ENCODE measurements at regions of chr19 and their contacts with region 1.

Region 1: GRCh38 chr19:52527134-52527955 is at the start of gene ZNF808:
- DNase-seq: peak; percentile 96
- H3K4me3 Mint-ChIP-seq: peak within 1 kb of the TSS; percentile 97
- H3K27ac Mint-ChIP-seq: peak within 1 kb of the TSS; percentile 98
- H3K4me1 Mint-ChIP-seq: peaks cover 22% of the 10 kb centered on the region
- H3K27me3 Mint-ChIP-seq: no peaks in the 10 kb centered on the region
- total RNA-seq, gene ZNF808: 21.2 and 21.6 TPM in 2 replicates

Region 2: GRCh38 chr19:51926784-51927742 is 600.3 kb before region 1 on chr19 and contains the start of gene ZNF613:
- intact Hi-C with region 1: loop called (anchors 5 kb)
- DNase-seq: peak; percentile 93
- H3K4me3 Mint-ChIP-seq: peak within 1 kb of the TSS; percentile 100
- H3K27ac Mint-ChIP-seq: peak within 1 kb of the TSS; percentile 97
- H3K4me1 Mint-ChIP-seq: peaks cover 19% of the 10 kb centered on the region
- H3K27me3 Mint-ChIP-seq: no peaks in the 10 kb centered on the region
- total RNA-seq, gene ZNF613: 3.5 and 5.0 TPM in 2 replicates

Region 3: DNA sequence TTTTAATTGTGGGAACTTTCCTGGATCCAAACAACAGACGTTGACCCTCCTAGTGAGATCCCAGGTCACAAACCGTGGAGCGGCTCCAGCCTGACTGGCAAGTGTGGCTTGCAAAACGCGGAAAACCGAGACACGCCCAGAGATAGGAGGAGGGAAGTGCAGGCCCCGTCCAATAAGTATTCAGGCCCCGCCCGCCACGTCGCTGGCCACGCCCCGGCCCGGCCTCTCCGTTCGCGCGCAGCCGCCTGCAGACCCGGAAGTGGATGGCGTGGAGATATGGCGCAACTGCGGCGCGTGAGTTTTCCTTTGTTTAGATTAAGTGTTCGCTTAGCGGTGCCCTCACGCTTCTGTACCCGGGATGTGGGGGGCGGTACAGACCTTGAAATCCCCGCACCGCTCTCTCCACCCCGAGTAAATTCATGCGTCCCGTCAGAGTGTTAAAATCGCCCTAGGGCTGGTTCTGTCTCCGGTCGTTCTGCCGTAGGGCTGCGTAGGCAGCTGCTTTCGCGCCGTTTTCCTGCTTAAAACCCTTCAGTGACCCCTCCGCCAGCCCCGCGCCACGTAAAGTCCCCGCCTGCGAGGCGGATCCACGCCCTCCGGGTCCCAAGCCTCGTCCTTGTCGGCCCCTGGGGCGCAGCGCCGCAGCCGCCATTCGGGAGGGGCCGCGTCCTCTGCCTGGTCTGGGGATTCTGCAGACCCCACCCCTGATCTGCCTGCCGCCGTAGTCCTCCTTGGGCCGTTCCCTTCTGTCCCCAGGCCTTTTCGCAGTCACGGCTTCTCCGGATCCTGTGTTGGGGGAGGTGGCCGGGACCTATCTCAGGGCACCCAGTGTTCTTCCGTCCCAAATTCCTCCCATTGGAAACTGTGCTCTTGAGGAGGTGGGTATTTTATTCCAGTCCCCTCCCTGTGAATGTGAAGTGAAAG is 257.7 kb before region 1 on chr19 and contains the start of gene ZNF766:
- intact Hi-C with region 1: loop called (anchors 1 kb)
- DNase-seq: peak; percentile 99
- H3K4me3 Mint-ChIP-seq: peak within 1 kb of the TSS; percentile 99
- H3K27ac Mint-ChIP-seq: peak within 1 kb of the TSS; percentile 96
- H3K4me1 Mint-ChIP-seq: peaks cover 11% of the 10 kb centered on the region
- H3K27me3 Mint-ChIP-seq: no peaks in the 10 kb centered on the region
- total RNA-seq, gene ZNF766: 18.2 and 19.9 TPM in 2 replicates

Region 4: DNA sequence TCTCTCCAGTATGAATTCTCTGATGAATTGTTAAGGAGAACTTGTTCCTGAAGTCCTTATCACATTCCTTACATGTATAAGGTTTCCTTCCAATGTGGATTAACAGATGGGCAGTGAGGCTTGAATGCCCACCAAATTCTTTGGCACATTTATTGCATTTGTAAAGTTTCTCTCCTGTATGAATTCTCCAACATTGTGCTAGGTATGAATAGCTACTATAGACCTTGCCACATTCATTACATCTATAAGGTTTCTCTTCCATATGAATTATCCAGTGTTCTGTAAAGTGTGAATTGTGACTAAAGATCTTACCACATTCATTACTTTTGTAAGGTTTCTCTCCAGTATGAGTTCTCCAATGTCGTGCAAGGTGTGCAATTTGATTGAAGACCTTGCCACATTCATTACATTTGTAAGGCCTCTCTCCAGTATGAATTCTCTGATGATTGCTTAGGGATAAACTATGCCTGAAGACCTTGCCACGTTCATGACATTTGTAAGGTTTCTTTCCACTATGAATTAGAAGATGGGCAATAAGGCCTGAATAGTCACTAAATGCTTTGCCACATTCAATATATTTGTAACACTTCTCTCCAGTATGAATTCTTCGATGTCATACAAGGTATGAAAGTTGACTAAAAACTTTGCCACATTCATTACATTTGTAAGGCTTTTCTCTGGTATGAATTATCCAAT is 53.5 kb before region 1 on chr19:
- intact Hi-C with region 1: no loop called
- DNase-seq: no peak
- H3K4me3 Mint-ChIP-seq: no peak overlapping the region
- H3K27ac Mint-ChIP-seq: no peak overlapping the region
- H3K4me1 Mint-ChIP-seq: no peaks in the 10 kb centered on the region
- H3K27me3 Mint-ChIP-seq: no peaks in the 10 kb centered on the region

Region 5: DNA sequence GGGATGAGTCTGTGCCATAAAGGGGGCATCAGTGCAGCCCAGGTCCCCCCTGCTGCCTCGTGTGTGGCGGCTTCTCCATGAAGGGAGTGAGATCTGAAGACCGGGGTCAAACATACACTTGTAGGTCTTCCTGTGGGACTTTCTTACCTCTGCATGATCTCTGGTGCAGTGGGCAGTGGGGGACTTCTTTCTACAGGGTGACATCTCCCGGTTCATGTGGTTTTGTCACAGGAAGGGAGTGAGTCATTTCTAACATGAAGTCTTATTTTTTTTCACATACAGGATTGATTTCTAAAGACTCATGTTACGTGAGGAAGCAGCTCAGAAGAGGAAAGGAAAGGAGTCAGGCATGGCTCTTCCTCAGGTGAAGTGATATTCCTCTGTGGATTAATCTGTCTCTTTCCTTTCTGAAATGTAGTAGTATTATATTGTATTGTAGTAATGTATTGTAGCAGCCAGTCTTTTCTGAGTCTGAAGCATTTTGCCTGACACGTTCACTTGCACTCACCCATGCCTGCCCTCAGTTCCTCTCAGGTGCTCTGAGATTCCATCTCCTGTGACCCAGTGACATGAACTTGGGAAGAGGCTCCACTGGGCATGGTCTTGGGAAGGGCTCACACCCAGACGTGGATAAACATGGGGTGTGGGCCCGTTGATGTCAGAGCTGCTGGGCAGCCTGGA is 15.8 kb after region 1 on chr19:
- intact Hi-C with region 1: no loop called
- DNase-seq: peak; percentile 77
- H3K4me3 Mint-ChIP-seq: peak overlapping the region; percentile 22
- H3K27ac Mint-ChIP-seq: peak overlapping the region; percentile 46
- H3K4me1 Mint-ChIP-seq: peaks cover 15% of the 10 kb centered on the region
- H3K27me3 Mint-ChIP-seq: no peaks in the 10 kb centered on the region

Region 6: DNA sequence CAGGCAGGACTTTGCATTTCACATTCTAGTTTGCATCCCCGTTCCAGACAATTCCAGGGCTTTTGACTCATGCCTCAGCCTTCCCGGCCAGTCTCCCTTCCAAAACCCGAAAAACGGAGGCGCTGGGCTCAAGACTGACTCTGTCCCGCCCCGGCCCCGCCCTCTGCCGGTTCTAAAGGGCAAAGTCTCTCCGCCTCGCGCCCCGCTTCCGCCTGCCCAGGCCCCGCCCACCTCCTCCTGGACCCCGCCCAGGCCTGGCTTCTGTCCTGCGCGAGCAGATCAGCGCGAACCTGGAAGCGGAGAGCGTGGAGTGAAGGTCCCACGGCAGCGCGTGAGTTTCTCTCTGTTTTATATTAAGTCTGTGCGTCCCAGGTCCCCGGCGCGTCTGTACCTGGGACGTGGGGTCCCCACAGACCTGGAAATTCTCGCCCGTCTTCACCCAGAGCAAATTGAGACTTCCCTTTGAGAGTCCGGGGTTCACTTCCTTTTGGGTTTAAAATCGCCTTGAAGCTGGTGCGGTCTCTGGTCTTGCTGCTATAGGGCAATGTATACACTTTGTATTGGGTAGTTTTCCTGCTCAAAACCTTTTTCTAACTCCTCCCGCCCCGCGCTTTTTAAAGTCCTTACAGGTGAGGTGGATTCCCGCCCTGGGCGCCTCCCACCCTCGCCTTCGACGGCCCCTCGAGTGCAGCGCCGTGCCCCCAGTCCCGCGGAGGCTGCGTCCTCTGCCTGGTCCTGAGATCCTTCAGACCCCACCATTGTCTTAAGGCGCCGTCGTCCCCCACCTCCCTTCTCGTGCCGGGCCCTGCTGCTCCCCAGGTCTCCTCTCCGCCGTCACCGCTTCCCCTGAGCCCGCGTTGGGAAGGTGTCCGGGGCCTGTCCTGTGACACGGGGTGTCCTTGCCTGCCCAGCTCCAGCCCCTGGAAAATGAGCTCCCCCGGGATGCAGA is 74.0 kb after region 1 on chr19:
- intact Hi-C with region 1: loop called (anchors 1 kb)
- DNase-seq: peak; percentile 98
- H3K4me3 Mint-ChIP-seq: peak overlapping the region; percentile 89
- H3K27ac Mint-ChIP-seq: peak overlapping the region; percentile 73
- H3K4me1 Mint-ChIP-seq: peaks cover 12% of the 10 kb centered on the region
- H3K27me3 Mint-ChIP-seq: no peaks in the 10 kb centered on the region

Region 7: GRCh38 chr19:52690369-52691214 is 163.2 kb after region 1 on chr19:
- intact Hi-C with region 1: loop called (anchors 2 kb)
- DNase-seq: peak; percentile 97
- H3K4me3 Mint-ChIP-seq: peak overlapping the region; percentile 94
- H3K27ac Mint-ChIP-seq: peak overlapping the region; percentile 91
- H3K4me1 Mint-ChIP-seq: peaks cover 22% of the 10 kb centered on the region
- H3K27me3 Mint-ChIP-seq: no peaks in the 10 kb centered on the region

Region 8: GRCh38 chr19:52897144-52897935 is 370.0 kb after region 1 on chr19 and contains the start of gene ZNF320:
- intact Hi-C with region 1: loop called (anchors 5 kb)
- DNase-seq: peak; percentile 98
- H3K4me3 Mint-ChIP-seq: peak within 1 kb of the TSS; percentile 92
- H3K27ac Mint-ChIP-seq: peak within 1 kb of the TSS; percentile 93
- H3K4me1 Mint-ChIP-seq: peaks cover 7% of the 10 kb centered on the region
- H3K27me3 Mint-ChIP-seq: no peaks in the 10 kb centered on the region
- total RNA-seq, gene ZNF320: 8.0 and 17.8 TPM in 2 replicates

Region 9: DNA sequence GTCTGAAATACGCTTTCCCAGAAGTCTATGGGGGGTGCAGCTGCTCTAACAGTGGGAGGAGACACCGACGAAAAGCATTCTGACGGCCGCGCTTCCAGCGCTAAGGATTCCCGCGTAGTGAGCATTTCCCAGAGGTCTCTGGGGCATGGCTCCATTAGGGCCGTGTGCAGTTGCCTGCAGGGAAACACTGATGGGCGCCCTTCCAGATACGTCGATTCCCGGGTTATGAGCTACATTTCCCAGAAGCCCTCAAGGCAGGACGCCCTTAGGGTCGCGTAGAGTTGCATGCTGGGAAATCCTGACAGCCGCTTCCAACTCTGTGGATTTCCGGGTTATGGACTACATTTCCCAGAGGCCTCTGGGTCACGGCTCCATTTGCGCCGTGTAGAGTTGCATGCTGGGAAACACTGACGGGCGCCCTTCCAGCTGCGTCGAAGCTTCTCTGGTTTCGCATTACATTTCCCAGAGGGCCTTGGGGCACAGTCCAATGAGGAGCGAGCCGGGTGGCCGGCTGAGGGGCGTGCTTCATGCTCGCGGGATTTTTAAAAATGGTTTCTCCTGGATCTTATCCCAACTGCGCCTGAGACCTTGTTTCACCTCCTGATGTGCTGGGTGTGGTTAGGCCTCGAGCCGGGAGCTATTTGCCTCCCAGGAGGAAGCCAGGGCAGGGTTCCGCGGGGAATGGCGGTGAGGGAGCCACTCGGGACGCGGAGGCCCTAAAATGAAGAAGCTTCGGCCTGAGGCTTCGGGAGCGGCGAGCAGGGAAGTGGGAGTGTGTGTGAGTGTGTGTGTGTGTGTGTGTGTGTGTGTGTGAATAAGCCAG is 993.4 kb after region 1 on chr19:
- intact Hi-C with region 1: loop called (anchors 5 kb)
- DNase-seq: peak; percentile 95
- H3K4me3 Mint-ChIP-seq: peak overlapping the region; percentile 100
- H3K27ac Mint-ChIP-seq: peak overlapping the region; percentile 94
- H3K4me1 Mint-ChIP-seq: peaks cover 14% of the 10 kb centered on the region
- H3K27me3 Mint-ChIP-seq: no peaks in the 10 kb centered on the region